Head of caudate nucleus (tissue), 42 donors: ENCODE measurements at regions of chr17 and their contacts with region 1.

Region 1: DNA sequence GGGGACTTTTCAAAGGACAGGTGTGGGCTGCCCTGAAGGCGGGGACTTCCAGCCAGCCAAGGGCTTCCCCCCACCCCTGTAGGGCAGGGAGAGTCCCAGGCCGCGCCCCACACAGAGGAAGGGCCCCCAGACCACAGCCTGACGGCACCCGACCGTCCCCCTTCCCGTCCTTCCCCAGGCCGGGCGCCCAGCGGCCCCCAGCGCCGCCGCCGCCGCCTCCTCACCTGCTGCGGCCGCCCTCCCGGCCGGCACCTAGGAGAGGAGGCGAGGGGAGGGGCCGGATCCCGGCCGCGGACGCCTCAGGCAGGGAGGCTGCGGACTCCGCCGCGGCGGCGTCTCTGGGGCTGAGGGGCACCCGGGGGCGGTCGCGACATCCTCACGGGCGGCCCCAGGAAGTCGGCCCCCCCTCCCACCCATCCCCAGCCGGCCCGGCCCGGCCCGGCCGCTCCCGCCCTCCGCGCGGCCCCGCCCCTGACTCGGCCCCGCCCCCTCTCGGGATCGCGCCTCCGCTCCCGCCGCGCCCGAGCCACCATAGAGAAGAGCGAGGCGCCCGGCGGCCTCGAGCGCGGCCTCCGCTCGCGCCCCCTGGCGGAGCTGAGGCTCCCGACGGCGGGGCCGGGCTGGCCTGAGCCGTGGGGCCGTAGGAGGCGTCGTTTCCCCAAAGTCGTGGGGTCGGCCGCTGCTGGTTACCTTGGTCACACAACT is 25.5 kb upstream of the RFFL start:
- DNase-seq: peak; percentile 64 to 96 (median 90)

Region 2: DNA sequence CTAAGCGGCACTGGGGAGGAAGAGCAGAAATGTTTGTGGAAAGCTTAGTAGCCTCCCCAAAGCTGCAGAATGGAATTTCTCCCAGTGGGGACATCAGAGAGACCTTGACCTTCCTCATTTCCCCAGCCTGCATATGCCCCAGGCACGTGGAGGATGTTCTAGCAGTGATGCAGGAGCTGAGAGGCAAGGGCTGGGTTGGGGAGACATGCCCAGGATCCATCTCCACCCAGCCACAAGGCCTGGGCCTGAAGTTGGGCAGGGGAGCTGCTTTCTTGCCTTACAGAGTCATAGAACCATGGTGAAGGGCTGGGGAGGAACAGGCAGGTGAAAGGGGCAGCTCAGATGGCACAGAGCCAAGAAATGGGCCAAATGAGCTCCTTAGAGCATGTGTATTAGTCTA is 405.6 kb before region 1 on chr17:
- intact Hi-C with region 1: no loop called
- DNase-seq: no peak

Region 3: GRCh38 chr17:34998205-34998604 is 90.8 kb before region 1 on chr17:
- intact Hi-C with region 1: loop called (anchors 5 kb)
- DNase-seq: peak; percentile 48 to 92 (median 82)

Region 4: DNA sequence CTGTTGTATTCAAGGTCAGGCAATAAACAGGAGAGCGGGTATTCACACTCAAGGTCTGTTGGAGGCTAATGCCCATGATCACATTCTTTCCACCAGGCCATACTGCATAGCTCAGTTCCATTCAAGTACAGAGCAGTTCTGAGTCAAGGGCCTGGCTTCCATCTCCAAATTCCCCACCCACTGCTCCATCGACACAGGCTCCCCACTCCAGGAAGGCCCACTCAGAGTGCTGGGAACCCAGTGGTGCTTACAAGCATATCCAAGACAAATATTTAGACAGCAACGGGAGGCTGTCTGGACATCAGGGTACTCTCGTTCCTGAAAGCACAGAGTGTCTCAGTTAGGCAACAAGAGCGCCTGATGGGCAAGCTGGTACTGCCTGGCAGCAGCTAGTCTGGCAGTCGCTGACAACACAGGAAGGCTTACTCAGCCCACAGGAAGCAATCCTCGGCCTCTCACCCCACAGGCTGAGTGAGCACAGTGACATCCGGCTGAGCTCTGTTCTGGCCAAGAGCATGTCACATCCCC is 66.4 kb before region 1 on chr17:
- intact Hi-C with region 1: no loop called
- DNase-seq: peak; percentile 73 to 97 (median 91)